Activated T-helper 1 cell treated with anti-CD3 and anti-CD28 coated beads, Interleukin-12 subunit alpha, Interleukin-12 subunit beta, Interleukin-2, Interleukin-4 antibody, amounts not matched to agents 30 ng/mL and 10 ng/mL and 1 ng/mL, durations not matched to agents 14 hours and 24 hours and 36 hours (primary cell): ENCODE measurements at regions of chr17 and their contacts with region 1.

Region 1: DNA sequence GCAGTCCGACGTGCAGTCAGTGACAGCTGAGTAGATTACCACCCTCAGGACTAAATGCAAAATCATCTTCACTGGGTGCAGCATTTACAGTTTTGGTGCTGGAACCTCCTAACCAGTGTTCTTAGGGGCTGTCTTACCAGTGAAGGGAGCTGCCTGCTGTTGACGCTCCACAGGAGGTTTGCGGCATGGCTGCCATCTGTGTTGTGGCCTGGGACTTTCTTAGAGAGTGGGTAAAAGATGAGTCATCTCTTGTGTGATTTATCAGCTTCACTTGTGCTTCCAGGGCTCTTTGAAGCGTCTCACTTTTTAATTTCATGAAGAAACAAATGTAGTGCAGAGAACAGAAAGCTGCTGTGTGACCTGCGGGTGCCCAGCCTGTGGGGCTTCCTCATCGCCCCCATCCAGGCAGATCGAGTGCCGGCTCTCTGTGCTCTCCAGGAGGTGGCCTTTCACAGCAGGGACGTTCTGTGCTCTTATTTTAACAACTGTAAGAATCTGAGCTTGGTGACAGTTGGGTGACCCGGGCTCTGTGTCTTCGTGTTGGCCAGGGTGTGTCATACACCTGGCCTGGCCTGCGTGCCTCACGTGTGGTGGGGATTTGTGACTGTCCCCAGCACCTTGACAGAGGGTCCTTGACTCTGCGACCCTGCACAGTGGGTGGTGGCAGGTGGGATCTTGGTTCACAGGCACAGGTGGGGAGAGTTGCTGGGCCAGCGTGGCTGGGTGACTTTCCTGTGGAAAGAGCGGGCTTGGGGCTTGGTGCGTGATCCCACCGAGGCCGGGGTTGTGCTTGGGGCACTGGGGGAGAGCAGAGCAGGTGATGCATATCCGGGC is 24.3 kb upstream of the ZNF750 start:
- DNase-seq: peak; percentile 91
- H3K4me3 Mint-ChIP-seq: peak overlapping the region; percentile 80
- H3K27ac Mint-ChIP-seq: peak overlapping the region; percentile 80
- H3K4me1 Mint-ChIP-seq: peaks cover 74% of the 10 kb centered on the region
- H3K27me3 Mint-ChIP-seq: no peaks in the 10 kb centered on the region

Region 2: GRCh38 chr17:82751571-82752370 is 112.4 kb before region 1 on chr17 and contains the start of gene TBCD:
- intact Hi-C with region 1: loop called (anchors 1 kb)
- DNase-seq: peak; percentile 81
- H3K4me3 Mint-ChIP-seq: peak within 1 kb of the TSS; percentile 90
- H3K27ac Mint-ChIP-seq: peak within 1 kb of the TSS; percentile 61
- H3K4me1 Mint-ChIP-seq: peaks cover 27% of the 10 kb centered on the region
- H3K27me3 Mint-ChIP-seq: peaks cover 4% of the 10 kb centered on the region
- total RNA-seq, gene TBCD: 106 and 111 TPM in 2 replicates

Region 3: GRCh38 chr17:82781894-82782274 is 82.3 kb before region 1 on chr17:
- intact Hi-C with region 1: loop called (anchors 1 kb)
- DNase-seq: peak; percentile 80
- H3K4me3 Mint-ChIP-seq: no peak overlapping the region
- H3K27ac Mint-ChIP-seq: no peak overlapping the region
- H3K4me1 Mint-ChIP-seq: peaks cover 7% of the 10 kb centered on the region
- H3K27me3 Mint-ChIP-seq: no peaks in the 10 kb centered on the region

Region 4: GRCh38 chr17:82816358-82817149 is 47.6 kb before region 1 on chr17:
- intact Hi-C with region 1: no loop called
- DNase-seq: no peak
- H3K4me3 Mint-ChIP-seq: no peak overlapping the region
- H3K27ac Mint-ChIP-seq: peak overlapping the region; percentile 26
- H3K4me1 Mint-ChIP-seq: peaks cover 27% of the 10 kb centered on the region
- H3K27me3 Mint-ChIP-seq: no peaks in the 10 kb centered on the region

Region 5: DNA sequence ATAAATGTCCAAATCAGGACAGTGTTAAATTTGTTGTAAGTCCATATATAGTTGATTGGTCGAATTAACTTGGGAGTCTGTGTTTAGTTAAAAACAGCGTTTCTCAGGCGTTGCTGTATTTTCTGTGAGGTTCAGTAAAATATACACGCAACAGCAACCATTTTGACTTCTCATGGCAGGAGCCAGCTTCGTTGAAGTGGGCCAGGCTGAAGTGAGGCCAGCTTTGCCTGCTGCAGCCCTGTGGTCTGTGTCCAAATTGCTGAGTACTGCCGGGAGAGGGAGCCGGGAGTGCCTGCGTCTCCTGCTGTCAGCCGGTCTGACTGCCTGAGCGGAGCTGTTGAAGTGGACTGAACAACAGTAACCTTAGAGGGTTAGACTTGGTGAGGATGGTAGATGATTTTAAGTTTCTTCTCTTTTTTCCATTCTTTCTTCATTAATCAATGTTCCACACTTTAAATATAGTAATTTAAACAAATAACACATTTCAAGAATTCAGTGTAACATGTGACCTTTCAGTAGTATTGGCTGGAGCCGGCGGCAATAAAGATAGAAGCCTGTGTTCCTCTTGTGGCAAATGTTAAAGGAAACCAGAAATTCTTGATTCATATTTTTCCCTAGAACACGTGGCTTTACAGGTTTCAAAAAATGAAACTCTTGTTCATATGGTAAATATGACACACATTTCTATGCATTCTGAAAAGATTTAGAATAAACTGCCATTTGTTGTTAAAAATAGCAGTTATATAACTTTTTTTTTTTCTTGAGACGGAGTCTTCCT is 12.6 kb after region 1 on chr17:
- intact Hi-C with region 1: loop called (anchors 1 kb)
- DNase-seq: no peak
- H3K4me3 Mint-ChIP-seq: peak overlapping the region; percentile 51
- H3K27ac Mint-ChIP-seq: peak overlapping the region; percentile 68
- H3K4me1 Mint-ChIP-seq: peaks cover 55% of the 10 kb centered on the region
- H3K27me3 Mint-ChIP-seq: no peaks in the 10 kb centered on the region

Region 6: GRCh38 chr17:82884970-82885353 is 20.8 kb after region 1 on chr17:
- intact Hi-C with region 1: loop called (anchors 1 kb)
- DNase-seq: peak; percentile 27
- H3K4me3 Mint-ChIP-seq: peak overlapping the region; percentile 79
- H3K27ac Mint-ChIP-seq: peak overlapping the region; percentile 94
- H3K4me1 Mint-ChIP-seq: peaks cover 64% of the 10 kb centered on the region
- H3K27me3 Mint-ChIP-seq: no peaks in the 10 kb centered on the region

Region 7: DNA sequence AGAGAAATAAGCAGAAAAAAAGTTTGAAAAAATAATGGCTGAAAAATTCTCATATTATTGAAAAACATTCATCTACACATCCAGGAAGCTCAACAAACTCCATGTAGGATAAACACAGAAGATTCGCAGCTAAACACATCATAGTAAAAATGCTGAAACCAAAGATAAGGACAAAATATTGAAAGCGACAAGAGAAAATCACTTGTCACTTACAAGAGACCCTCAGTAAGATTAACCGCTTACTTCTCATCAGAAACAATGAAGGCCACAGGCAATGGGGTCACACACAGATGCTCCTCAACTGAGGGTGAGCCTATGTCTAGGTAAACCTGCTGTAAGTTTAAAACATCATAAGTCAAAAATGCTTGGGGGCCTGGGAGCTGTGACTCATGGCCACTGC is 177.1 kb after region 1 on chr17:
- intact Hi-C with region 1: loop called (anchors 10 kb)
- DNase-seq: no peak
- H3K4me3 Mint-ChIP-seq: no peak overlapping the region
- H3K27ac Mint-ChIP-seq: no peak overlapping the region
- H3K4me1 Mint-ChIP-seq: peaks cover 11% of the 10 kb centered on the region
- H3K27me3 Mint-ChIP-seq: no peaks in the 10 kb centered on the region

Region 8: DNA sequence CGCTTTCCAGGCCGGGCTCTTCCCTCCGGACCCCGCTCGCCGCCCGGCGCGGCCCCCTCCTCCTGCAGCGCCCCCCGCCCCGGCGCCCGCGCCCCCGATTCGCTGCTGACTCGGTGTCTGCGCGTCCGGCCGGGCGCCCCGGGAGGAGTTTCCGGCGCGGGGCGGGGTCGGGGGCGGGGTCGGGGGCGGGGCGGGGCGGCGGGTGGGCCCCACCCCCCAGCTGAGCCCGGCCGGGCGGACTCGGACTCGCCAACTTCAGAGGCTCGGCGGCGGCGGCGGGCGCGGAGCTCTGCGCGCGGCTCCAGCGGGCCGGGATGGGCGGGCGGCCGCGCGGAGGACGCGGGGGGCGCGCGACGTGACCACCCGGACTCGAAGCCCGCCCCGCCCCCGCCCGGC is 215.2 kb after region 1 on chr17 and contains the start of gene METRNL:
- intact Hi-C with region 1: loop called (anchors 1 kb)
- DNase-seq: peak; percentile 51
- H3K4me3 Mint-ChIP-seq: peak within 1 kb of the TSS; percentile 58
- H3K27ac Mint-ChIP-seq: no peak within 1 kb of the TSS
- H3K4me1 Mint-ChIP-seq: peaks cover 28% of the 10 kb centered on the region
- H3K27me3 Mint-ChIP-seq: peaks cover 11% of the 10 kb centered on the region
- total RNA-seq, gene METRNL: 31.1 and 31.4 TPM in 2 replicates